ENCODE measurements at regions of chr19 and their contacts with region 1.

Region 1: DNA sequence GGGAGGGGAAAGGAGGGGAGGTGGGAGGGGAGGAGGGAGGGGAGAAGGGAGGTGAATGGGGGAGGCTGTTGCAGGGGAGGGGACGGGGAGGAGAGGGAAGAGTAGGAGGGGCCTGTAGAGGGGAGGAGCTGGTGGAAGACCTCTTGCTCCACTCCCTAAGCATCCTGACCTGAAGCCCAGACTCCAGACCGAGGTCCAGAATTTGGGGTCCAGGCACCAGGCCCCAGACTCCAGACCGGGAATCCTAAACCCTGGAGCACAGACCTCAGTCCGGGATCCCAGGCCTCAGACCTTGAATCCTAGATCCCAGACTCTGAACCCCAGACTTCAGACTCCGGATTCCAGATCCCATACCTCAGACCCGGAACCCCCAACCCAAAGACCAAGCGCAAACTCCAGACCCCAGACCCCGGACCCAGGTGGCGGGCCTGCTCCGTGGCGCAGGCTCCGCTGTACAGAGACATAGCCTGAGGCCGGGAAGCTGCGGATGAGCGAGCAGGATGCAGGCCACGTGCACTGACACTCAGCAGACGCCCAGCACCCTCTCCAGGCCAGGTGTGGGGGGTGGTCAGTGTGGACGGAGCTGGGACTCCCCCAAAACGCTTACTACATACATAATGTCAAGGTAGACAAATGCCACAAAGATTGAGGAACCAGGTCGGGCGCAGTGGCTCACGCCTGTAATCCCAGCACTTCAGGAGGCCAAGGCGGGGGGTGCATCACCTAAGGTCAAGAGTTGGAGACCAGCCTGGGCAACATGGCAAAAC is 710 bp upstream of the BTBD2 start:
- DNase-seq: peak; percentile 26
- H3K4me3 ChIP-seq: peak overlapping the region; percentile 56
- CTCF ChIP-seq: no peak

Region 2: GRCh38 chr19:2032296-2032941 is 16.2 kb after region 1 on chr19:
- CTCF ChIA-PET with region 1: interaction called, 22 read pairs
- POLR2A ChIA-PET with region 1: interaction called, 3 read pairs
- DNase-seq: no peak
- H3K4me3 ChIP-seq: no peak overlapping the region; the same call in 1 of the 2 replicates
- CTCF ChIP-seq: no peak

Region 3: GRCh38 chr19:2041683-2042484 is 25.7 kb after region 1 on chr19:
- CTCF ChIA-PET with region 1: interaction called, 14 read pairs
- POLR2A ChIA-PET with region 1: no interaction called
- DNase-seq: no peak
- H3K4me3 ChIP-seq: peak overlapping the region; percentile 6; the same call in 1 of the 2 replicates
- CTCF ChIP-seq: no peak

Region 4: GRCh38 chr19:2050991-2051772 is 35.0 kb after region 1 on chr19 and contains the start of gene MKNK2:
- CTCF ChIA-PET with region 1: interaction called, 16 read pairs
- POLR2A ChIA-PET with region 1: interaction called, 3 read pairs
- DNase-seq: no peak
- H3K4me3 ChIP-seq: peak within 1 kb of the TSS; percentile 73
- CTCF ChIP-seq: peak; percentile 79

Region 5: GRCh38 chr19:2070436-2070827 is 54.2 kb after region 1 on chr19:
- CTCF ChIA-PET with region 1: interaction called, 56 read pairs
- POLR2A ChIA-PET with region 1: no interaction called
- DNase-seq: no peak
- H3K4me3 ChIP-seq: no peak overlapping the region
- CTCF ChIP-seq: no peak

Region 6: DNA sequence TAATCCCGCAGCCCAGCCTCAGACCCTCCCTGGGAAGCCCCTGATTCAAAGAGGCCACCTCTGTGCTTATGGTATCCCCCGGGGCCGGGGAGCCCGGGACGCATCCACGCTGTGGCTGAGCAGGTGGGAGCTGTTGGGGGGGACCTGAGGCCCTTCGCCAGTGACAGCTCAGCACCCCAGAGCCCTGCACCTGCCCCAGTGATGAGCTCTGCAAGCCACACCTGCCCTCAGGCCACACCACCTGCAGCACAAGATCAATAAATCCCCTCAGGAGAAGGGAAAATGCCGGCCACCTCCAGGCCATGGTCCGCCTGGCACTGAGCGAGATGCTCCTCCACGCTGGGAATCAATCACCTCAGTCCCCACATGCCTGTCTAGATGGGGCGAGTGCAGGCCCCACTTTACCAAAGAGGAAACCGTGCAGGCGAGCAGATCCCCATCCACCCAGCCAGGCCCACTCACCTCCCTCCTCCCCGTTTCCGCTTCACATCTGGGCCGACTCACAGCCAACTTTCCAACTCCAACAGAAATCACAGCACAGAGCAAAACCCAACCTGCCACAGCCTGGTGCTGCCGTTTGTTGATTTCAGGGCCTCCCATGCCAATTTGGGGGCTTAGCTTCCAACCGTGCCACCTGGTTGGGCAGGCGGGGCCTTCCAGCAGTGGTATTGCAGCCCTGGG is 67.1 kb after region 1 on chr19:
- CTCF ChIA-PET with region 1: interaction called, 10 read pairs
- POLR2A ChIA-PET with region 1: no interaction called
- DNase-seq: no peak
- H3K4me3 ChIP-seq: no peak overlapping the region
- CTCF ChIP-seq: no peak

Region 7: DNA sequence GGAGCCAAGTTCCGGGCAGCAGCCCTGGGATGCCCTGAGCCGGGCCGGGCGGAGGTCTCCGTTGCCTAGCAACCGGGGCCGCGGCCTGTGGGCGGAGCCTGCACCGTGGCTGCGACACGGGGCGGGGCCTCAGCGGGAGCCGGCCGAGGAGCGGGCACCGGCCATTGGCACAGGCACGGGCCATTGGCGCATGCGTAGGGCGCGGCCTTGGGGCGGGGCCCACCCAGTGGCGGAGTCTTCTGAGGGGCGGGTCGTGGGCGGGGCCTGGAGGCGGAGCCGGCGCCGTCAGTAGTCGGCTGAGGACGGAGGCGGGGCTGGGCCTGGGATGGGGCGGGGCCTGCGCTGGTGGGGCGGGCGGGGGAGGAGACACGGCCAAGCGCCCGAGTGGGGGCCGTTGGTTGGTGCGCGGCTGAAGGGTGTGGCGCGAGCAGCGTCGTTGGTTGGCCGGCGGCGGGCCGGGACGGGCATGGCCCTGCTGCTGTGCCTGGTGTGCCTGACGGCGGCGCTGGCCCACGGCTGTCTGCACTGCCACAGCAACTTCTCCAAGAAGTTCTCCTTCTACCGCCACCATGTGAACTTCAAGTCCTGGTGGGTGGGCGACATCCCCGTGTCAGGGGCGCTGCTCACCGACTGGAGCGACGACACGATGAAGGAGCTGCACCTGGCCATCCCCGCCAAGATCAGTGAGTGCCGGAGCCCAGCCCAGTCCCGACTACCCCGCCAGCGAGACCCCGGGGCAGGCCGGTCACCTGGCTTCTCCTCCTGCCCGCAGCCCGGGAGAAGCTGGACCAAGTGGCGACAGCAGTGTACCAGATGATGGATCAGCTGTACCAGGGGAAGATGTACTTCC is 80.5 kb after region 1 on chr19 and contains the start of gene IZUMO4:
- CTCF ChIA-PET with region 1: interaction called, 15 read pairs
- POLR2A ChIA-PET with region 1: no interaction called
- DNase-seq: peak; percentile 64
- H3K4me3 ChIP-seq: peak within 1 kb of the TSS; percentile 75
- CTCF ChIP-seq: peak; percentile 67

Measured in AG04449 (cell line).